Caco-2 (cell line): ENCODE measurements at regions of chr1 and their contacts with region 1.

Region 1: GRCh38 chr1:91165033-91165654 is 143.3 kb upstream of the ZNF644 start:
- DNase-seq: peak; percentile 71 to 83
- H3K4me3 ChIP-seq: no peak overlapping the region
- H3K4me3 Mint-ChIP-seq: no peak overlapping the region
- H3K27ac Mint-ChIP-seq: no peak overlapping the region
- H3K4me1 ChIP-seq: no peaks in the 10 kb centered on the region
- H3K4me1 Mint-ChIP-seq: peaks cover 14% of the 10 kb centered on the region
- H3K27me3 ChIP-seq: no peaks in the 10 kb centered on the region
- H3K27me3 Mint-ChIP-seq: no peaks in the 10 kb centered on the region
- CTCF ChIP-seq: peak; percentile 72 to 87

Region 2: DNA sequence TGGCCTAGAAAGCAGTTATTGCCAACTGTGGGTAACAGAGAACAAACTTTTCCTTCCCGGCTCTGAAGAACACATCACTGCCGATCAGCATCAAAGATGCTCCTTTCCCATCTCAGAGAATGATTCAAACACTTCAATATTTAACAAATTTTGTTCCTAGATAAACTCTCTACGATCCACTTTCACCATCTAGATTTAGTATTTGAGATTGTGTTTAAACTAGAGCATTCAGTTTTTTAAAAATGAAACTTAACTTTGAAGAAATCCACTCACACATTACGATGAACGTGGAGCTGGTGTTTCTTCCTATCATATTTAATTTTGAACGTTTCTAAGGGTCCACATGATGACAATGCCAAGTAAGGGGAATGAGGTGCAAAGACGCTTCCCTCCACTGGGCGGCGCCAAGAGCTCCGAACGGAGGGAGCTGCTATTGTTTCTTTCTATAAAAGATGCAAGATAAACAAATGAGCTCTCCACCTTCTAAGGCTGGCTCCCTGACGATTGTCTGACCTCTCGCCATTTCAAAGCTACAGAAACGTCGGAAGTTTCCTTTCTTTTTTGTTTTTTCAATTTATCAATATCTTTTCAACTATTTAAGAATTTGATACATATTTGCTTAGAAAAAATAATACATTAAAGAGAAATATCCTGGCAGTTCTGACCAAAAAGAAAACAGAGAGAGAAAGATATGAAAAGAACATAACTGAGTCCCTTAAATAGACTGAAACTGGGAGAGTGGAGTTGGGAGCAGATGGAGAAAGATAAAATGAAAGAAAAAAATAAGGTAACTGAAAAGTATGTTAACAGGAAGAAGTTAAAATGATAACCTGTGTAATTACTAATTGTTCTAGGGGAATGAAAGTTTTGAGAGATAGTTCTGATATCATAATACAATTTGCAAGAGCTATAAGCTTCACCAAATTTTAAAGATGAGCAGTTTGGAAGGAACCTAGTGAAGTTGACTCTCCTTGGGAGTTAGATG is 443.6 kb before region 1 on chr1:
- CTCF ChIA-PET with region 1: interaction called, 12 read pairs
- POLR2A ChIA-PET with region 1: no interaction called
- intact Hi-C with region 1: loop called (anchors 10 kb)
- DNase-seq: peak in 1 of 2 experiments; percentile 57
- H3K4me3 ChIP-seq: no peak overlapping the region
- H3K4me3 Mint-ChIP-seq: no peak overlapping the region
- H3K27ac Mint-ChIP-seq: no peak overlapping the region
- H3K4me1 ChIP-seq: no peaks in the 10 kb centered on the region
- H3K4me1 Mint-ChIP-seq: no peaks in the 10 kb centered on the region
- H3K27me3 ChIP-seq: no peaks in the 10 kb centered on the region
- H3K27me3 Mint-ChIP-seq: peaks cover 5% of the 10 kb centered on the region
- CTCF ChIP-seq: peak; percentile 55 to 68

Region 3: DNA sequence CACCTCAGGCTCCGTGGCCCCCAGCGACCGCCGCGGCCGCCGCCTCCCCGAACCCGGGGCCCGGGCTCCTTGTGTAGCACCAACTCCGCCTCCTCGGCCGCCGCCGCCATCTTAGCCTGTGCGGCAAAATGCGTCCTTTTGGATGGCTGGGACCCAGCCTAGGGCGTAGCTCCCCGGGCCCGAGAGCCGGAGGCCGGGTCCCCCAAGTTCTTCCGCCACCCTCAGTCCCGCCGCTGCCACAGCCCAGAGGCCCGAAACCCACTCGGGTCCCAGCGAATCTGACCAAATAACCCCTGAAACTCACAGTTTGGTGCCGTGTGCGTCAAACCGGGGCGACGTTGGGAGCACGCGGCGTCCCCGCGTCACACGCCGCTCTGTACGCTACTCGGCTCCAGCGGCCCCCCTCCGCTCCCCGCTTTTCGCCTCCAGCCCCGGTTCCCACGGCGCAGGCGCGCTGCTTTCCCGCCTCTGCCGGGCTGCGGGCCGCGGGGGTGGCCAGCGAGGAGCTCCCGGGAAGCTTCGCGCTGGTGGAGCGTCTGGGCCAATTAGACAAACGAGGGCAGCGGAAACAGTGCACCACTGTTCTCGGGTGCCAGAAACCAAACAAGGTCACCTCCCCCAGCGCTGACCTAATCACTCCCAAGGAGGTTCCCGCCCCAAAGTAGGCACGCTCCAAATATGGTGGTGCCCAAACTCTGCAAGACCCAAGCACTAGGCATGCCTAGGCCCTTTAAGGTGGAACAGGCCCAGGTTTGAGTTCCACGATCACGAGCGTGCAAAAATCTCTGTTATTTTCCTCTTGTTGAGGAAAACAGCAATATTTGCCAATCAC is 143.2 kb before region 1 on chr1 and contains the start of gene ZNF644:
- CTCF ChIA-PET with region 1: interaction called, 18 read pairs
- POLR2A ChIA-PET with region 1: interaction called, 4 read pairs
- intact Hi-C with region 1: loop called (anchors 1 kb)
- DNase-seq: peak; percentile 85 to 88
- H3K4me3 ChIP-seq: peak within 1 kb of the TSS; percentile 69
- H3K4me3 Mint-ChIP-seq: peak within 1 kb of the TSS; percentile 85
- H3K27ac Mint-ChIP-seq: peak within 1 kb of the TSS; percentile 99
- H3K4me1 ChIP-seq: peaks cover 13% of the 10 kb centered on the region; the same call in 1 of the 2 replicates
- H3K4me1 Mint-ChIP-seq: no peaks in the 10 kb centered on the region
- H3K27me3 ChIP-seq: no peaks in the 10 kb centered on the region
- H3K27me3 Mint-ChIP-seq: no peaks in the 10 kb centered on the region
- CTCF ChIP-seq: no peak
- total RNA-seq, gene ZNF644: 32.5 and 35.9 TPM in 2 replicates

Region 4: GRCh38 chr1:91141858-91142257 is 23.3 kb before region 1 on chr1:
- CTCF ChIA-PET with region 1: interaction called, 8 read pairs
- POLR2A ChIA-PET with region 1: no interaction called
- intact Hi-C with region 1: loop called (anchors 1 kb)
- DNase-seq: no peak
- H3K4me3 ChIP-seq: no peak overlapping the region
- H3K4me3 Mint-ChIP-seq: no peak overlapping the region
- H3K27ac Mint-ChIP-seq: no peak overlapping the region
- H3K4me1 ChIP-seq: no peaks in the 10 kb centered on the region
- H3K4me1 Mint-ChIP-seq: no peaks in the 10 kb centered on the region
- H3K27me3 ChIP-seq: no peaks in the 10 kb centered on the region
- H3K27me3 Mint-ChIP-seq: peaks cover 3% of the 10 kb centered on the region
- CTCF ChIP-seq: no peak

Region 5: DNA sequence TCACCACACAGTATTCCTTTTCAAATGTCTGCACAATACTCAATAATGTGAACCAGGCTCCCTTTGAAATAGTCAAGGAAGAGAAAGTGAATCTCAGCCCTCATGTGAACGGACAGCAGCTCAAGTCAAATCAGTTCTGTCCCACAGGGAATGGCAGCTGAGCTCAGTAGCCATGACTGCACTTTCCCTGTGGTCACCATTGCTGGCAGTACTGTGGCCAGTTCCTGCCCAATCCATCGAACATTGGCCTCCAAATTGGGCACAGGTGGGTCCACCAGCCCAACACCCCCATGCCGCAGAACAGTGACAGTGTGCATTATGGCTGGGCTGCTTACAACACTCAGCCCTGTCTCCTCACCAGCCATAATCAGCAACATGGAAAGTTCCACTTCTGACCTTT is 38.2 kb after region 1 on chr1:
- CTCF ChIA-PET with region 1: no interaction called
- POLR2A ChIA-PET with region 1: no interaction called
- intact Hi-C with region 1: no loop called
- DNase-seq: no peak
- H3K4me3 ChIP-seq: no peak overlapping the region
- H3K4me3 Mint-ChIP-seq: no peak overlapping the region
- H3K27ac Mint-ChIP-seq: no peak overlapping the region
- H3K4me1 ChIP-seq: no peaks in the 10 kb centered on the region
- H3K4me1 Mint-ChIP-seq: no peaks in the 10 kb centered on the region
- H3K27me3 ChIP-seq: no peaks in the 10 kb centered on the region
- H3K27me3 Mint-ChIP-seq: peaks cover 3% of the 10 kb centered on the region
- CTCF ChIP-seq: no peak

Region 6: DNA sequence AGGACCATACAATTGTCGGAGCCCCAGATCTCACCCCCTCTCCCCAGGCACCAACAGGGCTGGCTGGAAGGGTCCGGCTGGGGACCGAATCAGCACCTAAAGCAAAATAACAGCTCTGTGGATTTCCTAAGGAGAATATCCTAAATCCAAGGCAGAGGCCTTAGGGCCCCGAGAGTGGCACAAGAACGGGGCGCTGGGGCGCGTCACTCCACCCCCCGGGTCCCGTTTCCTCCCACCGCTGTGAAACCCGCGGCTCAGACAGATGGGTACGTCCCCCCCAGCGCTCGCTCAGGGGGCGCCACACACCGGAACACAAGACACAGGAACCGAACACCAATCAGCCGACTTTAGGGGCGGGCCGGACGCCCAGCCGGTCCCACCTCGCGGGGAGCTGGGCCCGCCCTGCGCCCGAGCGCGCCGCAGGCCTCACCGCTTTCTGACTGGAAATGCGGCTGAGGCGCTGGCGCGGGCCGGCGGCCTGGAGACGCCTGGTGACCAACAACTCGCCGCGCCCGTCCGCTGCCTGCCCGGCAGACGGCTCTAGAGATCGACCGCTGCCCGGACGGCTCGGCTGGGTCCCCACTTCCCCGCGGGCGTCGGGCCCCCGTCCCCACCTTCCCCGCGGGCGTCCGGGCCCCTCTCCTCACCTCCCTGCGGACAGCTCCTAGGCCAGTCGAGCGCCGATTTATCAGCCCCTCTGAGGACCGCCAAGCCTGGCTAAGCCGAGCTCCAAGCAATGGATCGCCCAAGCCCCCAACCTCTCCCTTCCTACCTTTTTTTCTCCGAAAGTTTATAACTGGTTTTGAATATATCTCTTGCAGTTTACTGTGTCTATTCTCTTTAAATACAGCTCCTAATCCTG is 239.2 kb after region 1 on chr1 and contains the start of gene HFM1:
- CTCF ChIA-PET with region 1: interaction called, 4 read pairs
- POLR2A ChIA-PET with region 1: no interaction called
- intact Hi-C with region 1: loop called (anchors 2 kb)
- DNase-seq: peak; percentile 49 to 58
- H3K4me3 ChIP-seq: peak within 1 kb of the TSS; percentile 50
- H3K4me3 Mint-ChIP-seq: peak within 1 kb of the TSS; percentile 67
- H3K27ac Mint-ChIP-seq: no peak within 1 kb of the TSS
- H3K4me1 ChIP-seq: no peaks in the 10 kb centered on the region
- H3K4me1 Mint-ChIP-seq: no peaks in the 10 kb centered on the region
- H3K27me3 ChIP-seq: no peaks in the 10 kb centered on the region; the same call in 1 of the 2 replicates
- H3K27me3 Mint-ChIP-seq: peaks cover 6% of the 10 kb centered on the region
- CTCF ChIP-seq: no peak
- total RNA-seq, gene HFM1: 0.26 and 0.48 TPM in 2 replicates